Naive thymus-derived CD4-positive, alpha-beta T cell (primary cell): ENCODE measurements at regions of chrX and their contacts with region 1.

Region 1: DNA sequence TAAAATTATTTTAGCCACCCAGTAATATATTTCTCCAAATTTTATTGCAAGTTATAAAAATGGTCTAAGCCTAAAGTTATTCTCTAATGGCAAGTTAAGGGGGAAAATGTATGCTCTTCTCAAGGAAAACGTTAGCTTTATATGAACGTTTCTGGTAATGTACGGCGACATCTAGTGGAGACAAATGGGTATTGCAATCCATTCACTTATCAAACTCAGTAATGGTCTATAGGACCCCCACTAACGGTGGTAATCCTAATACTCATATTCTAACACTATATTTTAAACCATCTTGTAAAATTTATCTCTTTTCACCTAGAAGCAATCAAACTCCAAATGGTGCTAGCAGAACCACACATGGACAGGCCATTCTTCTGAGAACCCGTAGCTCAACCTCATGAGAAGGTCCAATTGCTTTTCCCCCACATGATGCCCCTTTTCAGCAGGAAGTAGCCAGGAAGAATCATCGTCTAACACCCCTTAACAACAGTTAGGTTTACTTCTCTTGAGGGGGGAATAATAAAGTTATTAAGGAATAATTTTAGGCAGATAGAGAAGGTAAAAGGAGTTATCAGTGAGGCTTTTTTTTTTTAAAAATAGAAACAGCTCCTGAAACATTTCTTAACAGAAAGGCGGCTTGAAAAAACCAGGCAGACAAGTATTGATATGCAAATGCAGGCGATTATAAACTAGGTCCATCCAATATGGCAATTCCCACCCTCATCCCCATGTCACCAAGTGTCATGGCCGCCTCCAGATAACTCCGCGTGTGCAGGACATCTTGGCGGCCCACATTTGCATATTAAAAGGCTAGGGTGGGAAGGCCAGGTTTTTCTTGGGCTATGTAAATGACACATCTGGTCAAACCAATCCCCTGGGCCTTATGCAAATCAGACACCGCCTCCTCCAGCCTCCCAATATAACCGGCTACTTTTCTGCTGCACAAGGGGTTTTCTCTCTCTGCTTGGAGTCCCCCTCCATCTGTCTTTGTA is 35.0 kb downstream of the NUDT11 start:
- DNase-seq: peak in 7 of 9 donors; percentile 16 to 49 (median 39)
- ATAC-seq: no peak
- H3K4me3 ChIP-seq: no peak overlapping the region
- H3K4me3 Mint-ChIP-seq: no peak overlapping the region
- H3K27ac ChIP-seq: no peak overlapping the region
- H3K27ac Mint-ChIP-seq: no peak overlapping the region
- H3K4me1 ChIP-seq: no peaks in the 10 kb centered on the region
- H3K4me1 Mint-ChIP-seq: no peaks in the 10 kb centered on the region
- H3K27me3 ChIP-seq: no peaks in the 10 kb centered on the region
- H3K27me3 Mint-ChIP-seq: no peaks in the 10 kb centered on the region

Region 2: DNA sequence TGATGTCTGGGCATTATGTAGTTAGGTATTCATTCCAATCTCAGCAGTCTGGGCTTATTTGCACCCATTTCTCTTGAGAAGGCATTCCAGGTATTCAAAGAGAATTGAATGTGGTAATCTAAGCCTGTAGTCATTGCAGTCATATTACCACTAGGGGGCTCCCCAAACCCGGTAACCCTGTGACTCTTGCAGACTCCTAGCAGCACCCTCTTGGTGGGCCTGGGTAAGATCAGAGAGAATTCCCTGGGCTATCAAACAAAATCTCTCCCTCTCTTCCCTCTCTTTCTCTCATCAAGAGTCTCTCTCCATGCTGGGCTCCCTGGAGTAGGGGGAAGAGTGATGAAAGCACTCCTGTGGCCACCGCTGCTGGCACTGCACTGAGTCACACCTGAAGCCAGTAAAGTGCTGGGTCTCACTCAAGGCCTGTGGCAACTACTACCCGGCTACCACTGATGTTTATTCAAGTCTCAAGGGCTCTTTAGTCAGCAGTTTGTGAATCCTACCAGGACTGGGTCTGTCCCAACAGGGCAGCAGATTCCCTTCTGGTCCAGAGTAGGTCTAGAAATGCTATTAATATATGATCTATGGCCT is 316.4 kb before region 1 on chrX:
- CTCF ChIA-PET with region 1: interaction called, 3 read pairs
- POLR2A ChIA-PET with region 1: no interaction called
- intact Hi-C with region 1: loop called (anchors 2 kb)
- DNase-seq: peak in 6 of 9 donors; percentile 7 to 36 (median 29)
- ATAC-seq: no peak
- H3K4me3 ChIP-seq: no peak overlapping the region
- H3K4me3 Mint-ChIP-seq: no peak overlapping the region
- H3K27ac ChIP-seq: no peak overlapping the region
- H3K27ac Mint-ChIP-seq: no peak overlapping the region
- H3K4me1 ChIP-seq: no peaks in the 10 kb centered on the region
- H3K4me1 Mint-ChIP-seq: no peaks in the 10 kb centered on the region
- H3K27me3 ChIP-seq: no peaks in the 10 kb centered on the region
- H3K27me3 Mint-ChIP-seq: peaks cover 8 to 26% (median 13%) of the 10 kb centered on the region in 5 donors

Region 3: GRCh38 chrX:51336584-51336983 is 124.8 kb before region 1 on chrX:
- CTCF ChIA-PET with region 1: interaction called, 34 read pairs
- POLR2A ChIA-PET with region 1: no interaction called
- intact Hi-C with region 1: loop called (anchors 1 to 2 kb)
- DNase-seq: peak in 7 of 9 donors; percentile 22 to 52 (median 40)
- ATAC-seq: peak; percentile 88
- H3K4me3 ChIP-seq: no peak overlapping the region
- H3K4me3 Mint-ChIP-seq: no peak overlapping the region
- H3K27ac ChIP-seq: no peak overlapping the region
- H3K27ac Mint-ChIP-seq: no peak overlapping the region
- H3K4me1 ChIP-seq: no peaks in the 10 kb centered on the region
- H3K4me1 Mint-ChIP-seq: peaks cover 0 to 11% (median 2%) of the 10 kb centered on the region in 7 donors
- H3K27me3 ChIP-seq: no peaks in the 10 kb centered on the region
- H3K27me3 Mint-ChIP-seq: peaks cover 0 to 8% (median 0%) of the 10 kb centered on the region in 5 donors

Region 4: DNA sequence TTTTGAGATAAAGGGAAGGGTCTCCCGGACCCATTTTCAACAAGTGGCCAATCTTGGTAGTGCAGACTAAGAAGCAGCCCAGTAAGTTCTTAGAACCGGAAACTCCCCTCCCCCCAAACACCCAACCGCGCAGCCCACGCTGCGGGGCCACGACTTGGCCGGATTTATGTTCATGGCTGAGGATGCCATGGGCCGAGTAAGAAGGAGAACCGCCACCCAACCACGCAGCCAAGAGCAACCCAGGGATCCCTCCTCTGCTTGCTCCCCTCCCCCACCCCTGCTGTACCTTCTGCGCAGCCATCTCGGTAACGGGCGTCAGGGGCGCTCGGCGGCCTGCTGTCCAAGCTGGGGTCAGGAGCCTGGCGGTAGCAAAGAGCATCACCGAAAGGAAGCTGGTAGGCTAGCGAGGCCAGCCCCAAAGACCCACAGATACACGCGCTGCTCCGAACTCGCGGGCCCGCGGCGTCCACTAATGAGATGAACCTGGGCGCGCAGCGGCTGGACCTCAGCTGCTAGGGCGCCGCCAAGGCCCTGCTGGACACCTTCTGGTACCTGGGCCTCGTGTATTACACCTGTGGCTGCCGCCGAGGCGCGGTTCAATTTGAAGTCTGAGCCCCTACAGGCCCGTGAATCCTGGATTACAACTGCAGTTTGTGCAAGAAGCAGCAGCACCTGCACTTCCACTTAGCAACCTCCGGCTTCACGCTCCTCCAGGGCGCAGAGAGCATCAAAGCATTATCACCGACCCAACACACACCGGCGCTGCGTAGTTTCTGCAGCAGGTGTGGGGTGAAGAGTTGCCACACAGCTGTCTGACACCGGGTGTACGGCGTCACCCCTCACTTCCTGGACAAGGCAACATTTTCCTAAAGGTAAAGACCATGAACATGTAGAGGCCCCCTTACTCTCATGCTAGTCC is 65.3 kb before region 1 on chrX:
- CTCF ChIA-PET with region 1: interaction called, 3 read pairs
- POLR2A ChIA-PET with region 1: no interaction called
- intact Hi-C with region 1: loop called in 1 of 2 experiments (anchors 2 kb)
- DNase-seq: peak; percentile 24 to 80 (median 70)
- ATAC-seq: peak; percentile 94
- H3K4me3 ChIP-seq: peak overlapping the region; percentile 74
- H3K4me3 Mint-ChIP-seq: peak overlapping the region; percentile 89 to 98 (median 94)
- H3K27ac ChIP-seq: peak overlapping the region; percentile 73
- H3K27ac Mint-ChIP-seq: peak overlapping the region; percentile 89 to 99 (median 93)
- H3K4me1 ChIP-seq: no peaks in the 10 kb centered on the region
- H3K4me1 Mint-ChIP-seq: peaks cover 10 to 69% (median 61%) of the 10 kb centered on the region in 7 donors
- H3K27me3 ChIP-seq: no peaks in the 10 kb centered on the region
- H3K27me3 Mint-ChIP-seq: no peaks in the 10 kb centered on the region

Region 5: DNA sequence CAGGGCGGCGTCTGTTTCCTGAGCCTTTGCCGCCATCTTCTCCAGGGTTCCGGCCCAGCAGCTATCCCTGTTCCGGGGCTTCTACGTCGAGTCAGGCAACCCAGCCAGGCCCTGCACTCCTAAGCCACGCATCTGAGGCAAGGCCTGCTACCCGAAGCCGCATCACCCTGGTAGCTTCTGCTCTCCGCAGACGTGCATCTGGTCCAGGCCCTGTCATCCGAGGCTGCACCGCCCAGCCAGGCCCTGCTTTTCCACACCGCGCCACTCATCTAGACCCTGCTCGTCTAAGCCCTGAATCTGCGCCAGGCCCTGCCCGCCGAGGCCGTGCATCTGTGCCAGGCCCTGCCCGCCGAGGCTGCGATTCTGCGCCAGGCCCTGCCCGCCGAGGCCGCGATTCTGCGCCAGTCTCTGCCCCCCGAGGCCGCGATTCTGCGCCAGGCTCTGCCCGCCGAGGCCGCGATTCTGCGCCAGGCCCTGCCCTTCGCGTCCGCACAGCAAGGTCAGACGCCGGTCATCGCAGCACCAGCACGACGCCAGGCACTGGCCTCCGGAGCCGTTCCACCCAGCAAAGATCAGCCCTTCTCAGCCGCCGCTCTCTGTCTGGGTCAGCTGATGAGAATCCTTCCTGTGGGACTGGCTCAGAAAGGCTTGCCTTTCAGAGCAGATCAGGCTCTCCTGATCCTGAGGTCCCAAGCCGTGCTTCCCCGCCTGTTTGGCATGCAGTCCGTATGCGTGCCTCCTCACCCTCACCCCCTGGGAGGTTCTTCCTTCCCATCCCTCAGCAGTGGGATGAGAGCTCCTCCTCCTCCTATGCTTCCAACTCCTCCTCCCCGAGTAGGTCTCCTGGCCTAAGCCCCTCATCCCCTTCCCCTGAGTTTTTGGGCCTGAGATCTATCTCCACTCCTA is 53.6 kb before region 1 on chrX:
- CTCF ChIA-PET with region 1: no interaction called
- POLR2A ChIA-PET with region 1: no interaction called
- intact Hi-C with region 1: no loop called
- DNase-seq: no peak
- ATAC-seq: no peak
- H3K4me3 ChIP-seq: no peak overlapping the region
- H3K4me3 Mint-ChIP-seq: no peak overlapping the region
- H3K27ac ChIP-seq: no peak overlapping the region
- H3K27ac Mint-ChIP-seq: no peak overlapping the region
- H3K4me1 ChIP-seq: no peaks in the 10 kb centered on the region
- H3K4me1 Mint-ChIP-seq: no peaks in the 10 kb centered on the region
- H3K27me3 ChIP-seq: no peaks in the 10 kb centered on the region
- H3K27me3 Mint-ChIP-seq: no peaks in the 10 kb centered on the region